GM12878 (cell line): ENCODE measurements at regions of chr3 and their contacts with region 1.

Region 1: DNA sequence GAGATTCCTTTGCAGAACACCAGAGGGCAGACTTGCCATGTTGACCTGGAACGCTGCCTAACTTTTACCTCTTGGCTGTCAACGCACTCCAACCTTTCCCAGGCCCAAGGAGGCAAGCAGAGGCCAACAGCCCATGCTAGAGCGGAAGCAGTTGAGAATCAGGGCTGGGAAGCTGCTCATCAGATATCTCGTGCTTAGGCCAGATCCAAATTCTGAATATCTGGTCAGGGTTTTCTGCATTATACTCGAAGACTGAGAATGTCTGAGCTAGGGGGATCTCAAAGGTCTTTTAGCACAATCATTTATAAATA is 2.5 kb downstream of the XIRP1 start:
- DNase-seq: peak; percentile 35
- ATAC-seq: peak; percentile 83
- H3K4me3 ChIP-seq: no peak overlapping the region
- H3K27ac ChIP-seq: no peak overlapping the region
- H3K4me1 ChIP-seq: peaks cover 3% of the 10 kb centered on the region
- H3K27me3 ChIP-seq: no peaks in the 10 kb centered on the region
- CTCF ChIP-seq: peak; percentile 69 to 86 (median 82)
- EP300 ChIP-seq: no peak
- POLR2A ChIP-seq: no peak
- RAD21 ChIP-seq: peak; percentile 91

Region 2: DNA sequence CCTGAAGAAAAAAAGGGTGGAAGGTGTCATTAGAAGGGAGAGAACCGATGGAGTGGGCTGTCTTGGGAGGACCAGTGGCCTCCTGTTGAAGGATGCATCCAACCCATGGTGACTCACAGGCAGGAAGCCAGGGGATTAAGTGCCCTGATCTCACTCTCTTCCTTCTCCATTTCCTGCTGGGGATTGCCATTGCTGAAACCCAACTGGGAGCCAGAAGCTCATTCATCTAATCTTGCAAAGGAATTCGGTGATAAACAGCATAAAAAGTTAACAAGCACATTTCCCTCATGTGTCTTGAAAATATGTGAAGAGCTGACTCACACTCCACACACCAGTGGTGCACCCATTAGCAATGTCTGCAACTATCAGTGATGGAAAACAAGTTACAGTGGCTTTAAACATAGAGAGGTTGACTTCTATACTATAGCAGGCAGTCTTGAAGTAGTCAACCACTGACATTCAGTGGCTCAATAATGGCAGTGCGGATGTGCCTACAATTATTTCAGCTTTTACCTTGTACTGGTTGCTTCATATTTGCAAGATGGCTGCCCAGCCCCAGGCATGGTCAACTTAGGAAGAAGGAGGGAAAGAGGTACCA is 23.7 kb before region 1 on chr3:
- CTCF ChIA-PET with region 1: interaction called, 28 read pairs
- POLR2A ChIA-PET with region 1: interaction called, 3 read pairs
- RAD21 ChIA-PET with region 1: no interaction called
- SMC1A ChIA-PET with region 1: no interaction called
- in situ Hi-C with region 1: no loop called
- intact Hi-C with region 1: no loop called
- DNase-seq: no peak
- ATAC-seq: no peak; the same call in none of the 3 replicates
- H3K4me3 ChIP-seq: no peak overlapping the region
- H3K27ac ChIP-seq: no peak overlapping the region
- H3K4me1 ChIP-seq: no peaks in the 10 kb centered on the region
- H3K27me3 ChIP-seq: no peaks in the 10 kb centered on the region; a peak in 1 of 4 replicates
- CTCF ChIP-seq: peak in 1 of 3 experiments; percentile 27; a peak in 2 of 6 replicates
- EP300 ChIP-seq: no peak
- POLR2A ChIP-seq: no peak
- RAD21 ChIP-seq: peak; percentile 39

Region 3: GRCh38 chr3:39208463-39209055 is 18.6 kb after region 1 on chr3:
- CTCF ChIA-PET with region 1: interaction called, 38 read pairs
- POLR2A ChIA-PET with region 1: interaction called, 4 read pairs
- RAD21 ChIA-PET with region 1: interaction called, 31 read pairs
- SMC1A ChIA-PET with region 1: interaction called, 18 read pairs
- in situ Hi-C with region 1: no loop called
- intact Hi-C with region 1: loop called (anchors 2 kb)
- DNase-seq: no peak
- ATAC-seq: peak; percentile 86
- H3K4me3 ChIP-seq: no peak overlapping the region
- H3K27ac ChIP-seq: no peak overlapping the region
- H3K4me1 ChIP-seq: peaks cover 8% of the 10 kb centered on the region; the same call in 1 of the 2 replicates
- H3K27me3 ChIP-seq: no peaks in the 10 kb centered on the region
- CTCF ChIP-seq: peak; percentile 65 to 77 (median 74)
- EP300 ChIP-seq: no peak
- POLR2A ChIP-seq: no peak
- RAD21 ChIP-seq: peak; percentile 70

Region 4: DNA sequence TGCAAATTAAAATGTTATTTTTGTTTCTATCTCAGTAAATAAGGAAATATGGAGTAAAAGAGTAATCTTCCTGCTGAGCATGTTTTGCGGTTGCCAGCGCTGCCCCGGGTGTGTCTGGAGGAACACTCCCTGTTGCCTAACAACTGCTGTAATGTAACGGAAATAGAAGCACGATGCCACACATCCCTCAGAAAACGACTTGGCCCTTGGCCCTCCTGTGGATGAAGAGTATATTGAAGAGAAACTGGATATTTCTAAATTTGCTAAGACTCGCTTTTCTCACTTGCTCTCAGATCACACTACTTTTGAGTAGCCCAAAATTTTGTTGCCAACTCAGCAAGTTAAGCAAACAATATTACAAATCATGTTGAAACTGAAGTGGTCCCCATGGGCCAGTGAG is 71.0 kb after region 1 on chr3:
- CTCF ChIA-PET with region 1: interaction called, 11 read pairs
- POLR2A ChIA-PET with region 1: no interaction called
- RAD21 ChIA-PET with region 1: interaction called, 7 read pairs
- SMC1A ChIA-PET with region 1: no interaction called
- in situ Hi-C with region 1: no loop called
- intact Hi-C with region 1: no loop called
- DNase-seq: peak; percentile 27
- ATAC-seq: peak; percentile 84
- H3K4me3 ChIP-seq: no peak overlapping the region
- H3K27ac ChIP-seq: no peak overlapping the region
- H3K4me1 ChIP-seq: peaks cover 16% of the 10 kb centered on the region
- H3K27me3 ChIP-seq: peaks cover 0 to 6% of the 10 kb centered on the region in 2 experiments; a peak in 2 of 4 replicates
- CTCF ChIP-seq: peak in 2 of 3 experiments; percentile 29 to 38; a peak in 2 of 6 replicates
- EP300 ChIP-seq: no peak
- POLR2A ChIP-seq: no peak
- RAD21 ChIP-seq: peak; percentile 35

Region 5: GRCh38 chr3:39378088-39378487 is 188.2 kb after region 1 on chr3:
- CTCF ChIA-PET with region 1: interaction called, 55 read pairs
- POLR2A ChIA-PET with region 1: no interaction called
- RAD21 ChIA-PET with region 1: interaction called, 21 read pairs
- SMC1A ChIA-PET with region 1: interaction called, 17 read pairs
- in situ Hi-C with region 1: loop called (anchors 5 kb)
- intact Hi-C with region 1: loop called (anchors 1 kb)
- DNase-seq: no peak
- ATAC-seq: peak; percentile 92
- H3K4me3 ChIP-seq: no peak overlapping the region
- H3K27ac ChIP-seq: no peak overlapping the region; the same call in 1 of the 2 replicates
- H3K4me1 ChIP-seq: peaks cover 14% of the 10 kb centered on the region
- H3K27me3 ChIP-seq: no peaks in the 10 kb centered on the region
- CTCF ChIP-seq: peak; percentile 84 to 92 (median 91); a peak in 5 of 6 replicates
- EP300 ChIP-seq: no peak
- POLR2A ChIP-seq: no peak
- RAD21 ChIP-seq: peak; percentile 96

Region 6: DNA sequence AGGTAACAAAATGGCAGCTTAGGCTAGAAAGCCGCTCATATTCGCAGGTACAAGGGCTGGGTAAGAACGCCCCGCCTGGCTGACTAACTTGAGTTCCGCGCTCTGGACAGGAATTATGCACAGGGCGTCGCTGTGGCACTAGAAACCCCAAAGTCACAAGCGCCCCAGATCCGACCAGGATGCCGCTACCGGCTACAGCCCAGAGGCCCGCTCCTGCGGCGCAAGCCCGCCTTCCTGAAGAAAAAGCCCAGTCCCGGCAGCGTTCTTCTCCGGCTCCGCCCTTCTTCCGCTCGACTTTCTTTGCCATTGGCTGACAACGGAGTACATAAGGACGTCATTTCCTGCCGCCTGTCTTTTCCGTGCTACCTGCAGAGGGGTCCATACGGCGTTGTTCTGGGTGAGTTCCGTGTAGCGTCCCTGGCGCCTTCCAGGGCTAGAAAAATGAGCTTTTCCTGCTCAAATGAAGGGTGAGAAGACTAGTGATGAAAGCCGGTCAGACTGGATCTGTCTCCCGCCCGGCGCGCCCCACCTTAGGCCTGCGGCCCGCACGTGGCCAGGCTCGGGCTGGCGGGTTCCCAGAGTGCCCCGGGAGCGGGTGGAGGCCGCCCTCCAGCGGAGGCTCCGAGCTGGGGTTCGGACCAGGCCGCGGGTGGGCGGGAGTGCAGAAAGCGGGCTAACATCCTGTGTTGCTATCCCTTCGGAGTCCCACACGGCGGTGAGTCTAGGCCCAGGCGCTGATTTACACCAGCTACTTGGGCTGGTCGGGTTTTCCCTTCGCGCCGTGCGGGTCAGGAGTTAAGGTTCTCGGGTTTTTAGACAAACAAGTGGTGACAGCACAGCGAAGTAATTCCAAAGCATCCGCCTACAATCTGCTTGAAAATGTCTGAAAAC is 216.7 kb after region 1 on chr3 and contains the start of gene RPSA:
- CTCF ChIA-PET with region 1: interaction called, 10 read pairs
- POLR2A ChIA-PET with region 1: no interaction called
- RAD21 ChIA-PET with region 1: no interaction called
- SMC1A ChIA-PET with region 1: interaction called, 3 read pairs
- in situ Hi-C with region 1: no loop called
- intact Hi-C with region 1: no loop called
- DNase-seq: peak; percentile 93
- ATAC-seq: peak; percentile 91
- H3K4me3 ChIP-seq: peak within 1 kb of the TSS; percentile 94
- H3K27ac ChIP-seq: peak within 1 kb of the TSS; percentile 83
- H3K4me1 ChIP-seq: no peaks in the 10 kb centered on the region
- H3K27me3 ChIP-seq: no peaks in the 10 kb centered on the region
- CTCF ChIP-seq: peak; percentile 42 to 55 (median 42); a peak in 5 of 6 replicates
- EP300 ChIP-seq: 0 out of 4 replicates have a peak, but pooled peaks of 1 of the 2 experiments have one; percentile 24
- POLR2A ChIP-seq: peak; percentile 100
- RAD21 ChIP-seq: peak; percentile 51
- polyA plus RNA-seq, gene RPSA: 2,843 to 4,532 TPM

Region 7: GRCh38 chr3:39515681-39516441 is 325.9 kb after region 1 on chr3:
- CTCF ChIA-PET with region 1: no interaction called
- POLR2A ChIA-PET with region 1: no interaction called
- RAD21 ChIA-PET with region 1: no interaction called
- SMC1A ChIA-PET with region 1: no interaction called
- in situ Hi-C with region 1: no loop called
- intact Hi-C with region 1: no loop called
- DNase-seq: no peak
- ATAC-seq: no peak
- H3K4me3 ChIP-seq: no peak overlapping the region
- H3K27ac ChIP-seq: no peak overlapping the region
- H3K4me1 ChIP-seq: no peaks in the 10 kb centered on the region
- H3K27me3 ChIP-seq: no peaks in the 10 kb centered on the region; a peak in 2 of 4 replicates
- CTCF ChIP-seq: no peak
- EP300 ChIP-seq: no peak
- POLR2A ChIP-seq: no peak
- RAD21 ChIP-seq: no peak